ENCODE measurements at regions of chr10 and their contacts with region 1.

Region 1: DNA sequence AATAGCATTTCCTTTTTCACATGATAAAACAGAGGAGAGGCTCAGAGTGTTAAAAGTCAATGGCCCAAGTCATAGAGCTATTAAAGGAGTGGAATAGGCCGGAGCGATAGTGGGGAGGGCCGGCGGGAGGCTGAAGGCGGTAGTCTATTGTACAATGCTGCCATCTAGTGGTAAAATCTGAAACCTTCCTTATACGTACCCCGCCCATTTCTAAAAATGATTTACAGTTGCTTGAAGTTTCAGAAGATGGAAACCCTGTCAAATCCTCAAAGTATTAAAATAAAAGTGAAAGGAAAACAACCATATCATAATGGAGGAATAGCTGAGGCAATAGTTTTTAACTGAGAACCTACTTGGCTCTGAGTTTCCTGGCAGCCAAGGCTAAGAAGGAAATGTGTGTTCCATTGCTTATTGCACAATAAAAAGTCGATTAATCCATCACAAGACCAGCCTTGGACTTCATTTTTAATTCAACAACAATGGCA is 209.1 kb downstream of the CCSER2 start:
- DNase-seq: no peak
- ATAC-seq: peak; percentile 89
- H3K4me3 ChIP-seq: no peak overlapping the region
- H3K27ac ChIP-seq: no peak overlapping the region
- H3K4me1 ChIP-seq: peaks cover 7% of the 10 kb centered on the region
- H3K27me3 ChIP-seq: peaks cover 6% of the 10 kb centered on the region
- CTCF ChIP-seq: peak; percentile 82

Region 2: DNA sequence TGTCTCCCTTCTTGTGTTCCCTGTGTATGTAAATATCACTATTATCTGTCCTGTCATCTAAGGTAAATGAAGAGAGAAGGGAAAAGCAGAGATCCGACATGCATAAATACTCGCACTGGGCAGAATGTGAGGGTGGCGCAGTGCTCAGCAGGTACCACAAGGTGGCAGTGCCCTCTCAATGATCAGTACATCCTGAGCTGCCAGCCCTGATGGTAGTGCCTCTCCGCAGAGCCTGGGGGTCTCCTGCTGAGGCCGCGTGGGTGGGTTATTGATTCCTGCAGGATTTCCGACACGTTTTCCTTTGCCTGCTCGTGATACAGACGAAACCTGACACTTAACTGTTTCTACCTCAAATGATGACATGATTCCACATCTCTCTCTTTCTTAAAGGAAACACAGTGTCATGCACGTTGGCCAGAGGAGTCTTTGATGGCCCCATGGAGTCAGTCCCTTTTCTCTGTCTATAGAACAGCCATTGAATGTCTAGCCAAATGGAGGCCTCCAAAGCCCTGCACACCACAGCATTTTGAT is 272.8 kb before region 1 on chr10:
- intact Hi-C with region 1: loop called (anchors 5 kb)
- DNase-seq: peak; percentile 77
- ATAC-seq: peak; percentile 94
- H3K4me3 ChIP-seq: no peak overlapping the region
- H3K27ac ChIP-seq: no peak overlapping the region
- H3K4me1 ChIP-seq: peaks cover 4% of the 10 kb centered on the region
- H3K27me3 ChIP-seq: no peaks in the 10 kb centered on the region
- CTCF ChIP-seq: peak; percentile 96

Region 3: DNA sequence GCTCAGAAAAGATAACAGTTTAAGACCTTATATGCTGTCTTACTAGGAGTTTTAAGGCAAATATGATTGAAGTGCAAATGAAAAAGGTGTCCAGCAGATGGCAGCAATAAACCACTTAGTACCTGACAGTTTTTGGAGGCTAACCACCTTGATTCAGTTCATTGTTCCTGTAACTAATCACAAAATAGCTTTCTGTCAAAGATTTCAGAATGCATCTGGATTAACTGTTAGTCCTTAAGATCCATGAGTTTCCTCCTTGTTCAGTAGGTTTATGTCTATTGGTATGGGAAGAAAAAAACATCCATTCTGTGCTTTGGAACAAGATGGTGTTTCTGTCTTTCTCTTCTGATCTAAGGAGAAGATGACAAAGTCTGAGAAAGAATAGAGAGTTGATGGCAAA is 162.5 kb before region 1 on chr10:
- intact Hi-C with region 1: loop called (anchors 10 kb)
- DNase-seq: no peak
- ATAC-seq: peak; percentile 72
- H3K4me3 ChIP-seq: no peak overlapping the region
- H3K27ac ChIP-seq: no peak overlapping the region
- H3K4me1 ChIP-seq: no peaks in the 10 kb centered on the region
- H3K27me3 ChIP-seq: no peaks in the 10 kb centered on the region
- CTCF ChIP-seq: peak; percentile 64

Region 4: DNA sequence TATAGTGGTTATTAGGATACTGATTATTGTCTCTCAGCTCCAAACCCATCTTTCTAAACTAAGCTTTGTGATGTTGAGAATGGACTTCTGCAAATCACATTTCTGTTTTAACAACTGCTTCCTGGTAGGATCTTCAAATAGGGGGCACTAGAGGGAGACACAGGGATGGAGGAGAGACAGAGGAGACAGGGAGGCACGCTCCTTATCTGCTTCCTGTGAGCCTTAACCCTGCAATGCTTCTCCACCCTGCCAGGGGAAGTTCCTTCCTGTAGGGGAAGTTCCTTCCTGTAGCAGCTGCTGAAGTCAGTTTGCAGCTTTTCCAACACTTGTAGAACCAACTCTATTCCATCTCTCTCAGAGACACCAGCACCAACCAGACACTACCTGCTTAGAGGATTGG is 638.1 kb after region 1 on chr10:
- intact Hi-C with region 1: no loop called
- DNase-seq: no peak
- ATAC-seq: no peak
- H3K4me3 ChIP-seq: no peak overlapping the region
- H3K27ac ChIP-seq: no peak overlapping the region
- H3K4me1 ChIP-seq: no peaks in the 10 kb centered on the region
- H3K27me3 ChIP-seq: no peaks in the 10 kb centered on the region
- CTCF ChIP-seq: no peak

Measured in upper lobe of right lung (tissue), 1 donor.